HEK293 (cell line): ENCODE measurements at regions of chr20 and their contacts with region 1.

Region 1: GRCh38 chr20:10434467-10434831 is 427 bp upstream of the MKKS start:
- H3K4me3 ChIP-seq: peak overlapping the region; percentile 67
- H3K27ac ChIP-seq: peak overlapping the region; percentile 85
- H3K4me1 ChIP-seq: no peaks in the 10 kb centered on the region
- CTCF ChIP-seq: no peak

Region 2: DNA sequence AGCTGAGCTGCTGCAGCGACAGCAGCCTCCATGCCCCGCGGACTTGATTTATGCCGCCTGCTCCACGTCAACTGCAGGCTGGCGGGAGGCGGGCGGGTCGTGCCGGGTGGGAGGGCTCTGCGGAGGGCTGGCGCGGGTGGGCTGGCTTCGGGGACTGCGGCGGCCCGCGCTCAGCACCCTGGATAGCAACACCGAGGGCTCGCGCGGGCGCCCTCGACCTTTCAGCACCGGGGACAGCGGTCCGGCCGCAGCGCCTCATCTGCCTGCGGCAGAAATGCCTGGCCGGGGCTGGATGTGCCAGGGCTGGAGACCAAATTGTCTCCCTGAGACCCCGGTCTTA is 215.0 kb before region 1 on chr20:
- CTCF ChIA-PET with region 1: no interaction called
- POLR2A ChIA-PET with region 1: interaction called, 12 read pairs
- H3K4me3 ChIP-seq: peak overlapping the region; percentile 30
- H3K27ac ChIP-seq: no peak overlapping the region
- H3K4me1 ChIP-seq: peaks cover 13% of the 10 kb centered on the region
- CTCF ChIP-seq: no peak